Activated CD4-positive, alpha-beta memory T cell treated with anti-CD3 and anti-CD28 coated beads for 36 hours (primary cell): ENCODE measurements at regions of chr1 and their contacts with region 1.

Region 1: GRCh38 chr1:86380257-86380861 is 15.8 kb downstream of the ODF2L start:
- DNase-seq: no peak
- H3K4me3 Mint-ChIP-seq: no peak overlapping the region
- H3K27ac Mint-ChIP-seq: no peak overlapping the region
- H3K4me1 Mint-ChIP-seq: peaks cover 9% of the 10 kb centered on the region
- H3K27me3 Mint-ChIP-seq: no peaks in the 10 kb centered on the region

Region 2: GRCh38 chr1:85544689-85545215 is 835.6 kb before region 1 on chr1:
- CTCF ChIA-PET with region 1: no interaction called
- POLR2A ChIA-PET with region 1: no interaction called
- intact Hi-C with region 1: no loop called
- DNase-seq: no peak
- H3K4me3 Mint-ChIP-seq: no peak overlapping the region
- H3K27ac Mint-ChIP-seq: no peak overlapping the region
- H3K4me1 Mint-ChIP-seq: no peaks in the 10 kb centered on the region
- H3K27me3 Mint-ChIP-seq: peaks cover 15% of the 10 kb centered on the region

Region 3: GRCh38 chr1:86218859-86219258 is 161.5 kb before region 1 on chr1:
- CTCF ChIA-PET with region 1: no interaction called
- POLR2A ChIA-PET with region 1: no interaction called
- intact Hi-C with region 1: no loop called
- DNase-seq: no peak
- H3K4me3 Mint-ChIP-seq: no peak overlapping the region
- H3K27ac Mint-ChIP-seq: no peak overlapping the region
- H3K4me1 Mint-ChIP-seq: no peaks in the 10 kb centered on the region
- H3K27me3 Mint-ChIP-seq: no peaks in the 10 kb centered on the region

Region 4: GRCh38 chr1:86356247-86356646 is 24.1 kb before region 1 on chr1:
- CTCF ChIA-PET with region 1: no interaction called
- POLR2A ChIA-PET with region 1: no interaction called
- intact Hi-C with region 1: no loop called
- DNase-seq: no peak
- H3K4me3 Mint-ChIP-seq: no peak overlapping the region
- H3K27ac Mint-ChIP-seq: no peak overlapping the region
- H3K4me1 Mint-ChIP-seq: no peaks in the 10 kb centered on the region
- H3K27me3 Mint-ChIP-seq: no peaks in the 10 kb centered on the region

Region 5: GRCh38 chr1:86419277-86419903 is 39.0 kb after region 1 on chr1:
- CTCF ChIA-PET with region 1: interaction called, 3 read pairs
- POLR2A ChIA-PET with region 1: no interaction called
- intact Hi-C with region 1: loop called (anchors 2 kb)
- DNase-seq: peak; percentile 53
- H3K4me3 Mint-ChIP-seq: no peak overlapping the region
- H3K27ac Mint-ChIP-seq: no peak overlapping the region
- H3K4me1 Mint-ChIP-seq: peaks cover 4% of the 10 kb centered on the region
- H3K27me3 Mint-ChIP-seq: peaks cover 1% of the 10 kb centered on the region

Region 6: GRCh38 chr1:86499987-86500593 is 119.7 kb after region 1 on chr1:
- CTCF ChIA-PET with region 1: interaction called, 57 read pairs
- POLR2A ChIA-PET with region 1: no interaction called
- intact Hi-C with region 1: loop called (anchors 1 kb)
- DNase-seq: no peak
- H3K4me3 Mint-ChIP-seq: no peak overlapping the region
- H3K27ac Mint-ChIP-seq: no peak overlapping the region
- H3K4me1 Mint-ChIP-seq: peaks cover 14% of the 10 kb centered on the region
- H3K27me3 Mint-ChIP-seq: peaks cover 13% of the 10 kb centered on the region

Region 7: GRCh38 chr1:86741947-86742572 is 361.7 kb after region 1 on chr1:
- CTCF ChIA-PET with region 1: interaction called, 3 read pairs
- POLR2A ChIA-PET with region 1: no interaction called
- intact Hi-C with region 1: loop called (anchors 1 kb)
- DNase-seq: peak; percentile 32
- H3K4me3 Mint-ChIP-seq: no peak overlapping the region
- H3K27ac Mint-ChIP-seq: no peak overlapping the region
- H3K4me1 Mint-ChIP-seq: peaks cover 4% of the 10 kb centered on the region
- H3K27me3 Mint-ChIP-seq: no peaks in the 10 kb centered on the region